Left cardiac atrium (tissue), 4 donors: ENCODE measurements at regions of chr14 and their contacts with region 1.

Region 1: GRCh38 chr14:106347890-106348755 is 821.7 kb downstream of the TMEM121 start:
- DNase-seq: no peak
- ATAC-seq: no peak

Region 2: GRCh38 chr14:106327234-106327633 is 20.9 kb before region 1 on chr14:
- intact Hi-C with region 1: loop called in 1 of 2 experiments (anchors 2 kb)
- DNase-seq: no peak
- ATAC-seq: no peak